Breast epithelium (tissue), 4 donors: ENCODE measurements at regions of chr5 and their contacts with region 1.

Region 1: GRCh38 chr5:175554296-175554695 is 75.9 kb downstream of the SFXN1 start:
- DNase-seq: no peak
- H3K4me3 ChIP-seq: no peak overlapping the region
- H3K27ac ChIP-seq: no peak overlapping the region
- H3K4me1 ChIP-seq: no peaks in the 10 kb centered on the region
- H3K27me3 ChIP-seq: peaks cover 0 to 3% of the 10 kb centered on the region in 2 donors
- CTCF ChIP-seq: no peak
- POLR2A ChIP-seq: no peak

Region 2: DNA sequence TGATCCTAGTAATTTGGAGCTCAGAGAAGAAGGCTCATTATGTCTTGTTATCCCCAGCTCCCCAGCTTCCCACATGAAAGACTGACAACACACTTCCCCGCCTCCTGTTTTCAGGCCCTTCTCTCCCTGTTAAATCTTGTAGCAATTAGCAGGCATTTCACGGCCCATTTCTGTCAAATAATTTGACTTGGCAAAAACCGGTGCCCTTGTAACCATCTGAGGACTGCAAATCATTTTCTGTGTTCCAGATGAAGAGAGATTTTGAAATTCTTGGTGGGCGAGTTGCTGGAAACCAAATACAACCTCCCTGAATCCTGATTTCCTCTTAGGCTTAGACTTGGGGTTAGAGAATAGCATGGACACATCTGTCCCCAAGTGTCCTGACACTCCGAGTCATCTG is 720.2 kb before region 1 on chr5:
- intact Hi-C with region 1: loop called (anchors 5 kb)
- DNase-seq: no peak
- H3K4me3 ChIP-seq: no peak overlapping the region
- H3K27ac ChIP-seq: no peak overlapping the region
- H3K4me1 ChIP-seq: no peaks in the 10 kb centered on the region
- H3K27me3 ChIP-seq: no peaks in the 10 kb centered on the region
- CTCF ChIP-seq: no peak
- POLR2A ChIP-seq: no peak